ENCODE measurements at regions of chr9 and their contacts with region 1.

Region 1: DNA sequence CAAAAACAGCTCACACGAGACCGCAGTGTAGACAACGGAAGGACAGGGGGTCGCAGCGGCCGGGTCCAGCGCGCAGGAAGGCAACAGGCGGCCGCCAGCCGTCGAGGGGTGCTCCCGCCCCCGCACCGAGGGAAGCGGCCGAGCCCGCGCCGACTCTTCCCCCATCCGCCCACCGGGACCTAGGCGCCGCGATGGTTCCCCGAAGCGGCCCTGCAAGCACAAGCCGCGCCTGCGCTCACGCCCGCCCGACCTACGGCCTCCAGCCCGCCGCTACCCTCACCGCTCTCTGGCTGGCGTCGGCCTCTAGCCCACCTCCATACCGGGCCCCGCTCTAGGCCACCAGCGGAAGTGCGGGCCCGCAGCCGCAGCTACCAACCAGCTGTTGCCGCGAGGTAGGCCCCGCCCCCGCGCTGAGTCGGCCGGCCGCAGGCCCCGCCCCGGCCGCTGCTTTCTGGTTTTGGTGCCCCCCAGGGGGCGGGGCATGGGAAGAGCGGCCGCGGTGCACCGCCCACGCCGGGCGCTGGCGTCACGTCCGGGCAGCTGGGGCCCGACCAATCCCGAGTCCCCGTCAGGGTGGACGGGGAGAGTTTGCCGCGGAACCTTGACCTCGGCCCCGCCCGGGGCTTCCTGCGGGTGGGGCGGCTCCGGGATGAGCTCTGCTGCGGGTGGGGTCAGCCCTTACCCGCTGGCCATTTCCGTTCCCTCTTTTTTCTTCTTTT is at the start of gene SETX:
- DNase-seq: peak; percentile 98
- H3K4me3 ChIP-seq: peak within 1 kb of the TSS; percentile 78 to 99 (median 88)
- H3K27ac ChIP-seq: peak within 1 kb of the TSS; percentile 88 to 98 (median 95)
- H3K4me1 ChIP-seq: peaks cover 0 to 41% (median 32%) of the 10 kb centered on the region in 4 donors
- H3K27me3 ChIP-seq: no peaks in the 10 kb centered on the region
- CTCF ChIP-seq: no peak
- EP300 ChIP-seq: no peak
- POLR2A ChIP-seq: peak; percentile 79 to 86
- total RNA-seq, gene SETX: 45.5 to 58.2 (median 54.6) TPM

Region 2: DNA sequence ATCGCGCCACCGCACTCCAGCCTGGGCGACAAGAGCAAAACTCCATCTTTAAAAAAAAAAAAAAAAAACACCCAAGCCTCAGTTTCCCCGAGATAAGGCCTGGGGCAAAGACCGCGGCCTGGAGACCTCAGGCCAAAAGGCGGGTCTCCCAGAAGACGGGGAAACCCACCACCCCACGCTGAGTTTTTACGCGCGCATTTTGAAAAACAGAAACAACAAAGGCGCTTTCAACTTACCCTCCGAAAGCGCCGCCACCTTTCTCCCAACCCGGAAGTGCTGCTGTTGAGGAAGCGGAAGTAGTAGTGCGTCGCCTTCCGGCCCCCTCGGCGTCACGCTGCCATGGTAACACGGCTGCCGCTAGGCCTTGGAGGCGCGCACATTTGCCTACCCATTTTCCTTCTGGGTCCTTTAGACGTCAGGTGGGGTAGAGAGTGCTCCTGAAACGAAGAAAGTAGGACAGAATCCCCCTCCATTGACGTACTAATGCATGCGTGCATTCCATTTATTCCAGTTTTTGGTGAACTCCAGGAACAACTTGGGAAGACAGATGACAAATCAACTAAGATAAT is 51.8 kb after region 1 on chr9 and contains the start of gene TTF1:
- intact Hi-C with region 1: loop called (anchors 2 kb)
- DNase-seq: peak; percentile 95
- H3K4me3 ChIP-seq: peak within 1 kb of the TSS; percentile 64 to 78 (median 70)
- H3K27ac ChIP-seq: peak within 1 kb of the TSS; percentile 23 to 57 (median 54)
- H3K4me1 ChIP-seq: peaks cover 0 to 38% (median 35%) of the 10 kb centered on the region in 4 donors
- H3K27me3 ChIP-seq: peaks cover 13 to 26% (median 23%) of the 10 kb centered on the region in 3 donors
- CTCF ChIP-seq: no peak
- EP300 ChIP-seq: no peak
- POLR2A ChIP-seq: no peak
- total RNA-seq, gene TTF1: 8.9 to 20.9 (median 14.2) TPM

Region 3: DNA sequence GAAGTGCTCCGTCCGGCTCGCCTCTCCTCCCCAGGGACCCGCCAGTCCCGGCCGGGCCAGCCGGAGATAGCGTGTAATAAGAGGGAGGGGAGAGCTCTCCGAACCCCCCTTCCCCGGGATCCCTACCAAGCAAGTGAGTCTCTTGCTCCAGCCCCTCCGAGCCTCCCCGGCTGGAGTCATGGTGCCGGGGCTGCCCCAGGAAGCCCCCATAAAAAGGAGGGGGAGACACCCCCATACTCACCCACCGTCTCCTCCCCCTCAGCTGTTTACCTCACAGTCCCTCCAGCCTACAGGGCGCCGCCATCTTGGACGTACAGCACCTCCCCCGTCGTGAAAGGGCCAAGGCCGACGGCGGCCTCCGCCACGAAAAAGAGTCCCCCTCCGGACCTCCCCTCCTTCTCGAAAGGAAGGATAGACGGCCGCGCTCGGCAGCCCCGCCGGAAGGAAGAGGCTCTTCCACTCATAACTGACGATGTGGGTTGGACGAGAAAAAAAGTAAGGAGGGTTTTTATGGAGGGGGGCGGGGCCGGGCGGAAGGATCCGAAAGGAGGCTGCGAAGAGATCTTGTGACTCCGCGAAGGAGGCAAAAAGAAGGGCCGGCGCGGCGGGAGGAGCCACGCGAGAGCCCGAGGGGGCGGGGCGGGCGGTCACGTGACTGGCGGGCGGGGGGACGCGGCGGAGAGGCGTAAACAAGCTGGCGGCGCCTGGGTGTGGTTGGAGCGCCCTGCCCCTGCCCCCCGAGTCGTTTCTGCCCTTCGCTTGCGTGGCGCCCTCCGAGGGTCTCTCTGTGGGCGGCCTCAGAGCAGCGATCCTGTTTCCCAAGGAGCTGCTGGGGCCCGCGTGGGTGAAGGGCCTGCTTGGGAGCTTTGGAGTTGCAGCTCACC is 589.7 kb after region 1 on chr9 and contains the start of gene TSC1:
- intact Hi-C with region 1: loop called (anchors 10 kb)
- DNase-seq: peak; percentile 98
- H3K4me3 ChIP-seq: peak within 1 kb of the TSS; percentile 94 to 100 (median 99)
- H3K27ac ChIP-seq: peak within 1 kb of the TSS; percentile 94 to 95 (median 94)
- H3K4me1 ChIP-seq: peaks cover 0 to 26% (median 23%) of the 10 kb centered on the region in 4 donors
- H3K27me3 ChIP-seq: no peaks in the 10 kb centered on the region
- CTCF ChIP-seq: no peak
- EP300 ChIP-seq: peak in 3 of 4 donors; percentile 16 to 67 (median 43)
- POLR2A ChIP-seq: peak; percentile 33 to 36
- total RNA-seq, gene TSC1: 35.3 to 55.9 (median 36.4) TPM